Panc1 (cell line): ENCODE measurements at regions of chr11 and their contacts with region 1.

Region 1: DNA sequence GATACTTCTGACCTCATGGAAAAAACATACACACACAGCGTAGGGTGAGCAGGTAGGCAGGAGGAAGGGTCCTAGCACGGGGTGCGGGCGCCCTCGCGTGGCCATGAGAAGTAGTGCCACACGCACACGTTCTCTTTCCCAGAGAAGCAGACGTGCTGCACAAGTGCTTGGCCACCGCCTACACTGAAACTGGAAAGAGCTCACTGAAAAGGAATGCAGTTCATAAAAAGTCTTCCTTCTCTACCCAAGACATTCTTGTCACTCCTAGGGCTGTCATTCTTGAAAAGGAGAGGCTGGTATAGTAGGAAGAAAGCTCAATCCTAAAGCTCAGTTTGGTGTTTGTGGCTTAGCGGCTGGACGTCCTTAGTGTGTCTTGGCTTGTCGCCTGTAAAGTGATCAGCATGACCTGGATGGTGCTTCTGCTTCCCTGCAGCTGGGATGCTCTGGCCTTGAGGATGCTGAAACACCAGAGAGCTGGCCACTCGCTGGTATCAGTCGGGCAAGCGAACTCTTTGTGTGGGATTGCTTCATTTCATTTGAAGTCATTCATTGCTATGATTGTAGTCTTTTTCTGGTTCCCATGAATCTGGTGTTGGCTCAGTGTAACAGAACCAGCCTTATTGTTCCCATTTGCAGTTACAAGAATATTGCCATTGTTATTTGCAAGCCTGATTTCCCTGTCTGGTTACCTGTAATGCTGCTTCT is 303.8 kb downstream of the NTM start:
- DNase-seq: peak; percentile 47
- ATAC-seq: peak; percentile 92
- H3K4me3 ChIP-seq: no peak overlapping the region
- H3K27ac ChIP-seq: no peak overlapping the region
- H3K4me1 ChIP-seq: no peaks in the 10 kb centered on the region
- H3K27me3 ChIP-seq: peaks cover 11% of the 10 kb centered on the region
- CTCF ChIP-seq: peak; percentile 99

Region 2: DNA sequence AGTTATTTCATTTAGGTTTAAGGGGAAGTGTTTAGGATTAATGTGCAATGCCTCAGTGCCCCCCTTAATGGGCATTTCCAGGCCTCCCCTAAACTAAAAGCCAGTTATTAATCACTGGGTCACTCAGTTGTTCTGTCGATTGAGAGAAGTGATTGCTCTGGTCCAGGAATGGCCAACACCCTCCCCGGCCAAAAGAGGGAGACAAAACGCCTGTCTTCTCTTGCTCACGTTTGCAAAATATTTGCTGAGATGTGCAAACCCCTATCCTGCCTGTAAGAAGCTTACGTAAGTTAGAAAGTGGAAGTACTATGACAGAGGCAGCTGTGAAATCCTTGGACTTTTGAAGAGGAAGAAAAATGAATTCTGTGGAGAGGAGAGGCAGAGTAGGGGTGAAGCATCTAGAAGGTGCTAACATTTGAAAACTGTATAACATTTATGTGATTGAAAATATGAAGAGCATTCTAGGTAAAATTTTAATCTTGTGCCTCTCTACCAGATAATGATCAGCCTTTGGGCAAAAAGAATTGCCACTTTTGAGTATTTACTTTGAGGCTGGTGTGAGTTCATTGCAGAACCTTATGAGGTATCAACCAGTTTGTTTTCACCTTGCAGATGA is 266.1 kb before region 1 on chr11:
- CTCF ChIA-PET with region 1: no interaction called
- POLR2A ChIA-PET with region 1: no interaction called
- in situ Hi-C with region 1: no loop called
- intact Hi-C with region 1: loop called (anchors 1 kb)
- DNase-seq: peak; percentile 20
- ATAC-seq: peak; percentile 78
- H3K4me3 ChIP-seq: no peak overlapping the region
- H3K27ac ChIP-seq: no peak overlapping the region
- H3K4me1 ChIP-seq: no peaks in the 10 kb centered on the region
- H3K27me3 ChIP-seq: peaks cover 6% of the 10 kb centered on the region
- CTCF ChIP-seq: peak; percentile 81

Region 3: DNA sequence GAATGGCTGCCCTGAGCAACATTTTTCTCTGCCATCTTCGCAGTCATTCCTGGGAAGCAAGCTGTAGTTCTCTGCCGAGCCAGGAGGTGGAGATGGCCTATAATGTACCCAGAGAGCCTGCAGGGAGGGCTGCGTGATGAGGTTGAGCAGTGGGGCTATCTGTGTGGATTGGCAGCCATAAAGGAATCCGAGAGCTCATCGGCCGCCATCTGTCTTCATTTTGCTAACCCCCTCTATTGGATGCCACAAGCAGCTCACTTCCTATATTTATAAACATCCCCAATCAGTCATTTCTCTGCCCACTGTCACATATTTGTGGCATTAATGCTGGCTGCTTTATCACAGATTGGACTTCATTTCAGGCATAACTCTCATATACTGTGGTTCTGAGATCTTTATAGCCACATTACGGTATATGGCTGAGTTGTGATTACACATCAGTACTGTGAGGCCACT is 94.2 kb before region 1 on chr11:
- CTCF ChIA-PET with region 1: interaction called, 3 read pairs
- POLR2A ChIA-PET with region 1: no interaction called
- in situ Hi-C with region 1: no loop called
- intact Hi-C with region 1: loop called (anchors 5 kb)
- DNase-seq: no peak
- ATAC-seq: peak; percentile 88
- H3K4me3 ChIP-seq: no peak overlapping the region
- H3K27ac ChIP-seq: no peak overlapping the region
- H3K4me1 ChIP-seq: no peaks in the 10 kb centered on the region
- H3K27me3 ChIP-seq: peaks cover 24% of the 10 kb centered on the region
- CTCF ChIP-seq: peak; percentile 66